Astrocyte of the cerebellum (primary cell): ENCODE measurements at regions of chr1 and their contacts with region 1.

Region 1: DNA sequence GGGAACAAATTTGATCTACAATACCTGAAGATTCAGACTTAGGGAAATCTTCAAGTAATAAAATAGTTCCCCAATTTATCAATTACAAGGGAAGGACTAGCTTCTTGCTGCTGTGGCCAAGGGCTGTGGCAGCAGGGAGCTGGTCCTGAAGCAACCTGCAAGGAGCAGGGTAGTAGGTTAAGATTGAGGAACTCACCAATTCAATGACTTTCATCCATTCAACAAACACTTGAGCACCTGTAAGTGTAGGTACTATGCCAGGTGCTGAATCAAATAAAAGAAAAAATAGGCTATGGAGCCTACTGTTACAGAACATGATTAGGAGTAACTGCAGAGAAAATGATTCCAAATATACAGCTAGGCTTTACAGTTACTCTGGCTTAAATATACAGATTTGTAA is 64.2 kb upstream of the RBM34 start:
- DNase-seq: no peak
- H3K4me3 ChIP-seq: no peak overlapping the region
- CTCF ChIP-seq: no peak

Region 2: GRCh38 chr1:235128456-235129328 is 96.6 kb before region 1 on chr1 and contains the start of gene TOMM20:
- in situ Hi-C with region 1: no loop called
- DNase-seq: peak; percentile 95
- H3K4me3 ChIP-seq: peak within 1 kb of the TSS; percentile 99
- CTCF ChIP-seq: no peak

Region 3: DNA sequence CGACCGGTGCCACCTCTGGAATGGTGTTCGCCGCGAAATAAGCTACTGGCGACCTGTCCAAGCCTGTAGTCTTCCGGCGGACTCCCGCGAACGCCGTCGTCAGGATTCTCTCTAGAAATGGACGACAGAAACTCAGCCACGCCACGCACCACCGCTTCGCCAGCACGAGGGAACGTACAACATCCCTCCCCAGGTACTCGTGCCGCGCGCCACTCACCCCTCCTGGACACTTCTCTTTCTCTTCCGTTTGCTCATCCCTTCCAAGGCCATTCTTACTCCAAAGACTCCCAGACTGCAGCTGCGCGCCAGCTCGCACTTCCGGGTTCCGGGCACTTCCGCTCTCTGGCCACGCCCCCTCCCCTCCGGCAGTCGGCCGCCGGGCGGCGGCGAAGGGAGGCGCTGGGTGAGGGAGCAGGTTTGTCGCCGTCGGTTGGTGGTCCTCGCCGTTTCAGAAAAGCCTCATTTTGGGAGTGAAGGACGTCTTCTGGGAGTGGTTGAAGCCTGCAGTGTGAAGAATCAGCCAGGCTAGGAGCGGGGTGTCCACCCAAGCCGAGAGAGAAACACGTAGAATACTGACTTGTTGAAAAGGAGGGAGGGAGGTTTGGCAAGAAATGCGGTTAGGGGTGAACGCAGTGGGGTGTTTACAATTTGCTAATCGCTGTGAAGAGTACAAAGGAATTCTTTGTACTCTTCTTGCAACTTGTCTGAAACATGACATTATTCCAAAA is 64.2 kb before region 1 on chr1 and contains the start of gene RBM34:
- in situ Hi-C with region 1: no loop called
- DNase-seq: peak; percentile 77
- H3K4me3 ChIP-seq: peak within 1 kb of the TSS; percentile 65
- CTCF ChIP-seq: peak; percentile 21

Region 4: GRCh38 chr1:235181561-235182245 is 43.6 kb before region 1 on chr1:
- in situ Hi-C with region 1: loop called (anchors 5 kb)
- DNase-seq: no peak
- H3K4me3 ChIP-seq: no peak overlapping the region
- CTCF ChIP-seq: no peak

Region 5: DNA sequence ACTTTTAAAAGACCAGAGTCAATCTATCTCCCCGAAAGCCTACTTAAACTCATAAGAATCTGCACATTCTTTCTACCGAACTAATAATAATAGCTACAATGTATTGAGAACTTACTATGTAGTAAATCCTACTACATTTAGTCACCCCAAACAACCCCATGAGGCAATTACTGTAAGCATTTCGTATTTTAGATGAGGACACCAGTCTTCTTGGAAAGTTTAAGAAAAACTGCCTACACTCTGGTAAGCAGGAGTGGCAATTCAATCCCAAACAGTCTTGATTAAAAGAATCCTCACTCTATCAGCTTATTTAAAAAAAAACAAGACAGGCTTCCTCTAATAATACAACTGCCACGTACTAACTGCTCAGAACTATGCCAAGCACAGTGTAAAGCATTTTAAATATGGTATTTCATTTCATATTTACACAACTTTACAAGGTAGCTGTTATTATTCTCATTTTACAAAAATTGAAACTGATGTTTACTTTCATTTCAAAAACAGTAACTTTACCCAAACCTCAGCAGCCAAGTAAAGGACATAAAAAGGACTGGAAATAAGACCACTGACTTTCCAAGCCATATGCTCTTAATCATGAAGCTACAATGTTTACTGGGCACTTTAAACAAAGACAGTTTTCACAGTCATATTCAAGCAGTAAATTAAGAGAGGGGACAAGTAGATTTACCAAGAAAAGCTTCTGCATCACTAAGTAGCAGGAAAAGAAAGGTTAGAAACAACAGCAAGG is 88.8 kb after region 1 on chr1:
- in situ Hi-C with region 1: loop called (anchors 5 kb)
- DNase-seq: no peak
- H3K4me3 ChIP-seq: no peak overlapping the region
- CTCF ChIP-seq: no peak